ENCODE measurements at regions of chr19 and their contacts with region 1.

Region 1: GRCh38 chr19:45542234-45542668 is 35.0 kb downstream of the VASP start:
- DNase-seq: no peak
- H3K4me3 ChIP-seq: no peak overlapping the region
- H3K27ac ChIP-seq: no peak overlapping the region
- H3K4me1 ChIP-seq: no peaks in the 10 kb centered on the region
- H3K27me3 ChIP-seq: no peaks in the 10 kb centered on the region
- CTCF ChIP-seq: no peak
- POLR2A ChIP-seq: no peak

Region 2: GRCh38 chr19:45499196-45500180 is 42.8 kb before region 1 on chr19:
- intact Hi-C with region 1: loop called (anchors 1 kb)
- DNase-seq: no peak
- H3K4me3 ChIP-seq: peak overlapping the region; percentile 21 to 27
- H3K27ac ChIP-seq: no peak overlapping the region
- H3K4me1 ChIP-seq: peaks cover 38% of the 10 kb centered on the region
- H3K27me3 ChIP-seq: no peaks in the 10 kb centered on the region
- CTCF ChIP-seq: no peak
- POLR2A ChIP-seq: no peak